ENCODE measurements at regions of chr20 and their contacts with region 1.

Region 1: GRCh38 chr20:47540443-47541354 is 39.0 kb downstream of the NCOA3 start:
- DNase-seq: no peak
- H3K4me3 Mint-ChIP-seq: no peak overlapping the region
- H3K27ac Mint-ChIP-seq: peak overlapping the region; percentile 65
- H3K4me1 Mint-ChIP-seq: peaks cover 56% of the 10 kb centered on the region
- H3K27me3 Mint-ChIP-seq: no peaks in the 10 kb centered on the region

Region 2: GRCh38 chr20:47508278-47508677 is 32.4 kb before region 1 on chr20:
- intact Hi-C with region 1: loop called (anchors 5 kb)
- DNase-seq: no peak
- H3K4me3 Mint-ChIP-seq: peak overlapping the region; percentile 76
- H3K27ac Mint-ChIP-seq: peak overlapping the region; percentile 71
- H3K4me1 Mint-ChIP-seq: peaks cover 62% of the 10 kb centered on the region
- H3K27me3 Mint-ChIP-seq: no peaks in the 10 kb centered on the region

Region 3: GRCh38 chr20:47886460-47887041 is 345.9 kb after region 1 on chr20:
- intact Hi-C with region 1: no loop called
- DNase-seq: no peak
- H3K4me3 Mint-ChIP-seq: no peak overlapping the region
- H3K27ac Mint-ChIP-seq: no peak overlapping the region
- H3K4me1 Mint-ChIP-seq: no peaks in the 10 kb centered on the region
- H3K27me3 Mint-ChIP-seq: no peaks in the 10 kb centered on the region